Activated naive CD4-positive, alpha-beta T cell treated with anti-CD3 and anti-CD28 coated beads for 36 hours (primary cell): ENCODE measurements at regions of chr12 and their contacts with region 1.

Region 1: DNA sequence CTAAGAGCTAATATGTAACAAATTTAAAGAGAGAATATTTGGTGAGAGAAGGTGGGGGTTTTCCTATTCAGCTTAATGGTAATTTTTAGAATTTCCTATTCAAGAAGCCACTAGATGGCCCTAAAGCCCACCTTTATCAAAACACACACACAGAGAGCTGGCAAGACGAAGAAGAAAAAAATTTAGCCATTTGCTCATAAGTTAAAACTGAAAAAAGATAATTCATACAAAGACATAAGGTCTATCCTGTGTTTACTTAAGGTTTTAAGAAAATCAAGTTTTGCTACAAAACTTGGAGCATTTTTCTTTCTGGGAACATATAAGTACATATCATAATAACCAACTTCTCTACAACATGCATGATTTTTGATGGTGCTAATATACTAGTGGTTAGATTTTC is 46.8 kb upstream of the PCED1B start:
- DNase-seq: peak; percentile 34
- H3K4me3 Mint-ChIP-seq: no peak overlapping the region
- H3K27ac Mint-ChIP-seq: peak overlapping the region; percentile 79
- H3K4me1 Mint-ChIP-seq: peaks cover 43% of the 10 kb centered on the region
- H3K27me3 Mint-ChIP-seq: no peaks in the 10 kb centered on the region

Region 2: DNA sequence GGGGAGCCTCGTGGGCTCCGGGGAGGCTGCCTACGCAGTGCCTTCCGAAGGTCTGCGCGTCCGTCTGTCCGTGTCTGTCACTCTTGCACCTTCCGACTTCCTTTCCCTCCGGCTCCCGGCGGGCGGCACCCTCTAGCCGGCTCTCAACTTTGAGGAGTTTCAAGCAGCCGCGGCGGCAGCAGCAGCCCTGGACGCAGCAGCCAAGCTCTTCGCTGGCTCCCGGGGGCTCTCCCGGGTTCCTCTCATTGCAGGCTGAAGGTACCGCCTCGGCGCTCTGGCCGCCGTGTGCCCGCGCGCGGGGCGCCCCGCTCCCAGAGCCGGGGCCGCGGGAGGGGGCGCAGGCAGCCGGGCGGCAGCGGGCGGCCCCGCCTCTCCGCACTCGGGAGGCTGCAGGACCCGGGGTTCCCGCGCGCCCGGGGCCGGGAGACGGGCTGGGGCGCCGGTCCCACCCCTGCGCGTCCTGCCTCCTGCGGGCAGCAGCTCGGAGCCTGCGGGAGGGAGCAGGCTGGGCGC is 46.9 kb after region 1 on chr12 and contains the starts of genes AMIGO2 and PCED1B:
- CTCF ChIA-PET with region 1: interaction called, 13 read pairs
- intact Hi-C with region 1: loop called (anchors 2 kb)
- DNase-seq: peak; percentile 88
- H3K4me3 Mint-ChIP-seq: peak within 1 kb of the TSS; percentile 95
- H3K27ac Mint-ChIP-seq: peak within 1 kb of the TSS; percentile 94
- H3K4me1 Mint-ChIP-seq: peaks cover 69% of the 10 kb centered on the region
- H3K27me3 Mint-ChIP-seq: no peaks in the 10 kb centered on the region
- total RNA-seq, gene AMIGO2: 19.2 to 19.6 TPM
- total RNA-seq, gene PCED1B: 138 to 143 TPM

Region 3: DNA sequence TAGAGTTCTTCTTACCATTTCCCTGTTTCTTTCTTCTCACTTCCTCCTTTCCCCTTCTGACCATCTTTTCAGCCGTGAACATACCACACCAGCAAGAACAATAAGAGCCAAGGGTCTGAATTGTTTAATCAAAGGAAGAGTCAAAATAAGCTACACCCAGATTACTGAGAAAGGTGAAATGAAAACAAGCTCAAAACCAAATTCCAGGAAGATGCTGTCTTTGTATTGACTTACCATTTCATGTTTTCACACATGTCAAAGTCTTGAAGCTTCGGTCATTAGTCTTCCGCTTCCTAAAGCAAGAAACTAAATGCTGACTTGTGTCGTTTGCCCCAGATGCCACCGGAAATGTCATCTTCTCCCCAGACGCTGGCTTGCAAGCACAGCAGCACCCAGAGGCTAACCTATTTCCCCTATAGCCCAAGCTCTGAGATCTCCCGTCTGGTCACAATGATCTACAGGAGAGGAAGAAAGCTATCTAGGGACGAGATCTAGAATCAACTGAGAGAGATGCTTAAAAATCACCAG is 183.6 kb after region 1 on chr12:
- CTCF ChIA-PET with region 1: interaction called, 14 read pairs
- intact Hi-C with region 1: no loop called
- DNase-seq: peak; percentile 83
- H3K4me3 Mint-ChIP-seq: peak overlapping the region; percentile 94
- H3K27ac Mint-ChIP-seq: peak overlapping the region; percentile 100
- H3K4me1 Mint-ChIP-seq: peaks cover 12% of the 10 kb centered on the region
- H3K27me3 Mint-ChIP-seq: no peaks in the 10 kb centered on the region

Region 4: DNA sequence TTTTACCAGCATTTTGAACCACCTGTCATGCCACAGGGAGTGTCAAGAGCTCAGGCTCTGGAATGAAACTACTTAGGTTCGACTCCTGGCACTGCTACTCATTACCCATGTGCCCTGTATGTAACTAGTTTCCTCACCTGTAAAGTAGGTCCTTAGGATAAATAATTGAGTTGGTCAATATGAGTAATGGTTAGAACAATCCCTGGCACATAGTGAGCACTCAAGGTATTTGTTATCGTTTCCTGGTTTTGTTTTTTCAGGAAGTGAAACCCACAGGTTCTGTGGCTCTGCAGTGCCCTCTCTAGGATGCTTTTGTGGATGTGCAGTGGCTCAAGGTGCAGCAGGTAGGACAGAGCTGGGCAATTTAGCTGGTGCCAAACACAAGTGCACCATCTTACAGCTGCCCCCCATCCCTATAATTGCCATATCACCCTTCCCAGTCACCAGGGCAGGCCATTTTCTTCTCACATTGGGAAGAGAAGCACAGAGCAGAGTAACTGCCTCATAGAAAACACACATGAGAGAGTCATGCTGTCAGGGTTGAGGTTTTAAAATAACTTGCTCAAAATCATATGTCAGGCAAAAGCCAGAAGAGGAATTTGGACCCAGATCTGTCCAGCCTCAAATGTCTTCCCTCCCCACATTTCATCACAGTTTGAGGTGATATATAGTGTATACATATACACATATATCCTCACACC is 375.7 kb after region 1 on chr12:
- CTCF ChIA-PET with region 1: interaction called, 9 read pairs
- intact Hi-C with region 1: loop called (anchors 1 kb)
- DNase-seq: peak; percentile 73
- H3K4me3 Mint-ChIP-seq: no peak overlapping the region
- H3K27ac Mint-ChIP-seq: peak overlapping the region; percentile 60
- H3K4me1 Mint-ChIP-seq: peaks cover 76% of the 10 kb centered on the region
- H3K27me3 Mint-ChIP-seq: no peaks in the 10 kb centered on the region

Region 5: GRCh38 chr12:47686645-47687240 is 654.1 kb after region 1 on chr12:
- CTCF ChIA-PET with region 1: interaction called, 24 read pairs
- intact Hi-C with region 1: loop called (anchors 1 kb)
- DNase-seq: peak; percentile 57
- H3K4me3 Mint-ChIP-seq: no peak overlapping the region
- H3K27ac Mint-ChIP-seq: no peak overlapping the region
- H3K4me1 Mint-ChIP-seq: peaks cover 12% of the 10 kb centered on the region
- H3K27me3 Mint-ChIP-seq: no peaks in the 10 kb centered on the region